Activated B cell treated with CpG ODN at 0.5 μM for 24 hours (primary cell): ENCODE measurements at regions of chr4 and their contacts with region 1.

Region 1: GRCh38 chr4:85084380-85085094 is 118.0 kb upstream of the WDFY3 start:
- DNase-seq: no peak
- ATAC-seq: peak; percentile 56
- H3K4me3 Mint-ChIP-seq: no peak overlapping the region
- H3K27ac Mint-ChIP-seq: no peak overlapping the region
- H3K4me1 Mint-ChIP-seq: peaks cover 5% of the 10 kb centered on the region
- H3K27me3 Mint-ChIP-seq: peaks cover 7% of the 10 kb centered on the region
- CTCF ChIP-seq: no peak

Region 2: DNA sequence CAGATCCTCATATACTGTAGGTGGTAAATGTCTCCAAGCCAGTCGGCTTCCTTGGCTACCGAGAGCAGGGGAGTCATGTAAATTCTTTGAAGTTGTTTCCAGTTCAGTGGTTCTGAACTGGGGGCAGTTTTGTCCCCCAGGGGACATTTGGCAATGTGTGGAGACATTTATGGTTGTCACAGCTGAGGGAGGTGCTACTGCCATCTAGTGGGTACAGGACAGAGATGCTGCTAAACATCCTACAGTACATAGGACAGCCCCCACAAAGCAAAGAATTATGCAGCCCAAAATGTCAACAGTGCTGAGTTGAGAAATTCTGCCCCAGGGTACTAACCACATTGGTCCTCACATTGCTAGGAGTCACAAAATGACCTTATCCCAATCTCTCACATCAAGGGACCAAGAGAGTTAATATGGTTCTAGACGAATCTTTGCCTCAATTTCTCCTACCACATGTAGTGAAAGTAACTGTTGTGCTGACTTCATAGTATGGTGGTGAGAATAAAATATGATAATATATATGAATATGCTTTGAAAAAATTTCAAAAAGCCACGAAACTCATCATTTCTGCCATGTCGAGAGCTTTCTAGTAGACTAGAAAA is 286.0 kb after region 1 on chr4:
- CTCF ChIA-PET with region 1: no interaction called
- POLR2A ChIA-PET with region 1: no interaction called
- intact Hi-C with region 1: loop called (anchors 5 kb)
- DNase-seq: peak; percentile 23
- ATAC-seq: peak; percentile 94
- H3K4me3 Mint-ChIP-seq: peak overlapping the region; percentile 33
- H3K27ac Mint-ChIP-seq: peak overlapping the region; percentile 50
- H3K4me1 Mint-ChIP-seq: peaks cover 29% of the 10 kb centered on the region
- H3K27me3 Mint-ChIP-seq: no peaks in the 10 kb centered on the region
- CTCF ChIP-seq: no peak

Region 3: DNA sequence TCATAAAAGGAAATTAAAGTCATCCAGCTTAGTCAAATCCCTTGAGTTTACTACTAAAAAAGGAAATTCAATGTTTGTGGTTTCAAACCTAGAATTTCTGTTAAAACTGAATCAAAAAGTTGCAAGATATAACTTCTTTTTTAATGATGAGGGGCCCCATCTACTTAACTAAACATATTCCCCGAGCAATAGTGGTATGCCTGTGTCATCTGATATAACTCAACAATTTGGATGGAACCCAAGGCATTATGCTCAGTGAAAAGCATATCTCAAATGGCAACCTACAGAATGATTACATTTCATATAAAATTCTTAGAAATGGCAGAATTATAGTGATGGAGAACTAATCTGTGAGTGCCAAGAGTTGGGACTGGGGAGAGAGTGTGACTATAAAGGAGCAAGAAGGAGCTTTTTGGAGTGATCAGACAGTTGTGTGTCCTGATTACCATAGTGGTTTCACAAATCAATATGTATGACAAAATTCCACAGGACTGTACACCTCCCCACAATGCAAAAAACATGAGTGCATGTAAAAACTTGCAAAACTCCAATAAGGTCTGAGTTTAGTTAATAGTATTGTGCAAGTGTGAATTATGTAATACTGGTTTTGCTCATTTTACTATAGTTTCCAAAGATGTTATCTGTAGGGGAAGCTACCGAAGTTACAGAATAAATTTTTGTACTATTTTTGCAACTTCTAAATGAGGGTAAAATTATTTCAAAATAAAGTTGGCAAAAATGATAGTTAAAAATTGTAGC is 713.7 kb after region 1 on chr4:
- CTCF ChIA-PET with region 1: no interaction called
- POLR2A ChIA-PET with region 1: no interaction called
- intact Hi-C with region 1: loop called (anchors 2 kb)
- DNase-seq: no peak
- ATAC-seq: no peak
- H3K4me3 Mint-ChIP-seq: no peak overlapping the region
- H3K27ac Mint-ChIP-seq: no peak overlapping the region
- H3K4me1 Mint-ChIP-seq: peaks cover 16% of the 10 kb centered on the region
- H3K27me3 Mint-ChIP-seq: no peaks in the 10 kb centered on the region
- CTCF ChIP-seq: no peak

Region 4: DNA sequence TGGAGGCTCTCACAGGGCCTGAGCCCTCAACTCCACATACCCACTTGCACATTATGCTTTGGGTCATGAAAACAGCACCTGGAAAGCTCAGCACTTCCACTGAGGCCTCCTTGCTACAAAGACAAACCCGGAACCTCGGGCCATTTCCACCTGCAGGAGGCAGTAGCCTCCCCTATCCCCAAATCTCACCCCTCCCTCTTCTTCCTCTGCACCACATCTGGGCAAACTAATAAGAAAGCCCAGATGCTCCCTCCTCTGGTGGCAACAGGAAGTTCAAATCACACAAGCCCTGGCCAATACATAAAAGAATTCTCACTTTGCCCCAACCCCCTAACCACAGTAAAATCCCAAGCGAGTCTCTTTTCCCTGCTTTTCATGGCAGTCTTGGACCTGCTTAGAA is 1138.9 kb after region 1 on chr4:
- CTCF ChIA-PET with region 1: no interaction called
- POLR2A ChIA-PET with region 1: no interaction called
- intact Hi-C with region 1: loop called (anchors 5 kb)
- DNase-seq: no peak
- ATAC-seq: no peak
- H3K4me3 Mint-ChIP-seq: no peak overlapping the region
- H3K27ac Mint-ChIP-seq: no peak overlapping the region
- H3K4me1 Mint-ChIP-seq: no peaks in the 10 kb centered on the region
- H3K27me3 Mint-ChIP-seq: no peaks in the 10 kb centered on the region
- CTCF ChIP-seq: no peak